B cell (primary cell): ENCODE measurements at regions of chr1 and their contacts with region 1.

Region 1: GRCh38 chr1:212455803-212456528 is 23.2 kb downstream of the NENF start:
- DNase-seq: peak; percentile 84
- ATAC-seq: peak; percentile 85
- H3K4me3 ChIP-seq: no peak overlapping the region
- H3K4me3 Mint-ChIP-seq: no peak overlapping the region
- H3K27ac ChIP-seq: no peak overlapping the region
- H3K27ac Mint-ChIP-seq: no peak overlapping the region
- H3K4me1 ChIP-seq: peaks cover 0 to 6% of the 10 kb centered on the region in 2 donors
- H3K4me1 Mint-ChIP-seq: no peaks in the 10 kb centered on the region
- H3K27me3 ChIP-seq: peaks cover 0 to 4% (median 0%) of the 10 kb centered on the region in 4 experiments
- H3K27me3 Mint-ChIP-seq: no peaks in the 10 kb centered on the region
- CTCF ChIP-seq: peak; percentile 99

Region 2: DNA sequence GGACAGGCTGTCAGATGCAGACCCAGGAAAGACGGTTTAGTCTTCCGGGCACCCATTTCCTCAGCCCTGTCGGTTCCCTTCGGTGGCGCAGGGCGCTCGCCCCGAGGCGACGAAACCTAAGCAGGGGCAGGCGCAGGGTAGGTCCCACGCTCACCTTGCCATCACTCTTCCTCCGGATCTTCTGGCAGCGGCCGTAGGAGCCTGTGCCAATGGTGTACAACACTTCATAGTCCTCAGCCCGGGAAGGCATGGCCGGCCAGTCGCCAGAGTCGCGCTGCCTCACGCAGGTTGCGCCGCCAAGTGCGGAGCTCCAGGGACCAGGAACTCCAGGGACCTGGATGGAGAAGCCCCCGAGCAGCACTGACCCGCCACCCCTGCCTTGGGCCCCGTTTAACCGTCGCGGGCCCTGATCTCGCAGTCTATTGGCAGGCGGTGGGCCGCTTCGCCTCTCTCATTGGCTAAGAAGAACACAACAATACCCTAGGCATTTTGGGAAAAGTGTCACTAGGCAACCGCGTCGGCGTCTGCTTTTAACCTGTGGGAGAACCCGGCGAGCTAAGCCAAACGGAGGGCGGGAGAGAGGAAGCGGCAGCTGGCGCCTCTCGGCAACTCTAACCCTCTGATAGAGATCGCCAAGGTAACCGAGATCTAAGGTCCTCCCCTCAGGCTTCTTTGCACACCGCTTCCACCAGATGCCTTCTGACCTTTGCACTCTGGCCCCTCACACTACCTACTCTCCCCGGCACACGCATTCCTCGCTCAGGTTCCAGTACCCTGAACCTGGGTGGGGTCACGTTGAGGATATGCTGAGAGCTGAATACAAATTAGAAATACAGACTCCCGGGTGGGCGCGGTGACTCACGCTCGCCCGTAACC is 780.5 kb before region 1 on chr1 and contains the start of gene NEK2:
- CTCF ChIA-PET with region 1: interaction called, 81 read pairs
- POLR2A ChIA-PET with region 1: no interaction called
- intact Hi-C with region 1: loop called (anchors 1 kb)
- DNase-seq: peak; percentile 82
- ATAC-seq: peak; percentile 88
- H3K4me3 ChIP-seq: peak within 1 kb of the TSS; percentile 19 to 80 (median 68)
- H3K4me3 Mint-ChIP-seq: peak within 1 kb of the TSS; percentile 93
- H3K27ac ChIP-seq: peak within 1 kb of the TSS in 1 of 2 donors; percentile 49
- H3K27ac Mint-ChIP-seq: peak within 1 kb of the TSS; percentile 66
- H3K4me1 ChIP-seq: peaks cover 21 to 30% of the 10 kb centered on the region in 2 donors
- H3K4me1 Mint-ChIP-seq: peaks cover 35% of the 10 kb centered on the region
- H3K27me3 ChIP-seq: no peaks in the 10 kb centered on the region
- H3K27me3 Mint-ChIP-seq: no peaks in the 10 kb centered on the region
- CTCF ChIP-seq: no peak
- total RNA-seq, gene NEK2: 0.32 TPM in 1 of 2 replicates, not detected in the other

Region 3: GRCh38 chr1:212035123-212035834 is 420.7 kb before region 1 on chr1 and contains the starts of genes DTL and INTS7:
- CTCF ChIA-PET with region 1: interaction called, 40 read pairs
- POLR2A ChIA-PET with region 1: interaction called, 3 read pairs
- intact Hi-C with region 1: no loop called
- DNase-seq: peak; percentile 99
- ATAC-seq: peak; percentile 86
- H3K4me3 ChIP-seq: peak within 1 kb of the TSS; percentile 58 to 95 (median 84)
- H3K4me3 Mint-ChIP-seq: peak within 1 kb of the TSS; percentile 99
- H3K27ac ChIP-seq: peak within 1 kb of the TSS; percentile 71 to 75
- H3K27ac Mint-ChIP-seq: peak within 1 kb of the TSS; percentile 95
- H3K4me1 ChIP-seq: peaks cover 16 to 19% of the 10 kb centered on the region in 2 donors
- H3K4me1 Mint-ChIP-seq: peaks cover 50% of the 10 kb centered on the region
- H3K27me3 ChIP-seq: no peaks in the 10 kb centered on the region
- H3K27me3 Mint-ChIP-seq: no peaks in the 10 kb centered on the region
- CTCF ChIP-seq: peak; percentile 95
- total RNA-seq, gene DTL: 0.10 and 0.37 TPM in 2 replicates
- total RNA-seq, gene INTS7: 15.9 and 19.2 TPM in 2 replicates

Region 4: GRCh38 chr1:212077051-212077450 is 378.9 kb before region 1 on chr1:
- CTCF ChIA-PET with region 1: interaction called, 364 read pairs
- POLR2A ChIA-PET with region 1: no interaction called
- intact Hi-C with region 1: no loop called
- DNase-seq: no peak
- ATAC-seq: no peak
- H3K4me3 ChIP-seq: no peak overlapping the region
- H3K4me3 Mint-ChIP-seq: no peak overlapping the region
- H3K27ac ChIP-seq: no peak overlapping the region
- H3K27ac Mint-ChIP-seq: no peak overlapping the region
- H3K4me1 ChIP-seq: no peaks in the 10 kb centered on the region
- H3K4me1 Mint-ChIP-seq: no peaks in the 10 kb centered on the region
- H3K27me3 ChIP-seq: no peaks in the 10 kb centered on the region
- H3K27me3 Mint-ChIP-seq: no peaks in the 10 kb centered on the region
- CTCF ChIP-seq: no peak

Region 5: GRCh38 chr1:212344905-212345304 is 111.1 kb before region 1 on chr1:
- CTCF ChIA-PET with region 1: interaction called, 17 read pairs
- POLR2A ChIA-PET with region 1: no interaction called
- intact Hi-C with region 1: no loop called
- DNase-seq: no peak
- ATAC-seq: no peak
- H3K4me3 ChIP-seq: no peak overlapping the region
- H3K4me3 Mint-ChIP-seq: no peak overlapping the region
- H3K27ac ChIP-seq: no peak overlapping the region
- H3K27ac Mint-ChIP-seq: no peak overlapping the region
- H3K4me1 ChIP-seq: no peaks in the 10 kb centered on the region
- H3K4me1 Mint-ChIP-seq: no peaks in the 10 kb centered on the region
- H3K27me3 ChIP-seq: no peaks in the 10 kb centered on the region
- H3K27me3 Mint-ChIP-seq: no peaks in the 10 kb centered on the region
- CTCF ChIP-seq: no peak

Region 6: DNA sequence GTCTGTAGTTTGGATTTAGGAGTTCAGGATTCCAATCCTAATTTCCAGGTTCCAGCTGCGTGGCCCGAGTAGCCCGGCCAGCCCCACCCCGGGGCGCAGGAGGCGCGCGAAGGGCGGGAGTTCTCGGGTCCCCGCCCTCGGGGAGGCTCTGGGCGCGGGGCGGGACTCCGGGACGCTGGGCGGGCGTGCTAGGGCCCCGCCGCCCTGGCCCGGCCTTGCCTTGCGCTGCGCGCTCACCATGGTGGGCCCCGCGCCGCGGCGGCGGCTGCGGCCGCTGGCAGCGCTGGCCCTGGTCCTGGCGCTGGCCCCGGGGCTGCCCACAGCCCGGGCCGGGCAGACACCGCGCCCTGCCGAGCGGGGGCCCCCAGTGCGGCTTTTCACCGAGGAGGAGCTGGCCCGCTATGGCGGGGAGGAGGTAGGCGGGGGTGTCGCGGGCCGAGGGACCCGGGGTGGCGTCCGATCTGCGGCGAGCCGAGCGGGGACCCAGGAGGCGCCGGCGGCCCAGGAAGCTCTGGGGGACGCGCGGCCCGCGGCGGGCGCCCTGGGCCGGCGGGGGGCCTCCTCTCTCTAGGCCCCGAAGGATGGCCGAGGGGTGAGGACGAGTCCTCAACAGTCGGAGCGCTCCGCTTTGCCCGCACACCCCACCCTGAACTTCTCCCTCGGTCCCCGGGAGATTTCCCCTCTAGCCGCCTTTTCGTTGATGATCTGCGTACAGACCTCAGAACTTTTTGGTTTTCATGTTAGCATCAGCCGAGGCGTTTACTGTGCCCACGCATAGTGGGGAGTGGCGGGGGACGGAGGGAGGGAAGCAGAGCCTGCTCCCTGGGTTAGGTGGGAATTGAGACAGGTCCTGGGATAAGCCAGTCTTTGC is 23.0 kb before region 1 on chr1 and contains the start of gene NENF:
- CTCF ChIA-PET with region 1: interaction called, 26 read pairs
- POLR2A ChIA-PET with region 1: no interaction called
- intact Hi-C with region 1: no loop called
- DNase-seq: peak; percentile 81
- ATAC-seq: peak; percentile 99
- H3K4me3 ChIP-seq: peak within 1 kb of the TSS; percentile 26 to 82 (median 58)
- H3K4me3 Mint-ChIP-seq: peak within 1 kb of the TSS; percentile 82
- H3K27ac ChIP-seq: peak within 1 kb of the TSS in 1 of 2 donors; percentile 65
- H3K27ac Mint-ChIP-seq: peak within 1 kb of the TSS; percentile 33
- H3K4me1 ChIP-seq: peaks cover 12 to 15% of the 10 kb centered on the region in 2 donors
- H3K4me1 Mint-ChIP-seq: peaks cover 25% of the 10 kb centered on the region
- H3K27me3 ChIP-seq: no peaks in the 10 kb centered on the region
- H3K27me3 Mint-ChIP-seq: no peaks in the 10 kb centered on the region
- CTCF ChIP-seq: no peak
- total RNA-seq, gene NENF: 20.3 and 22.7 TPM in 2 replicates

Region 7: DNA sequence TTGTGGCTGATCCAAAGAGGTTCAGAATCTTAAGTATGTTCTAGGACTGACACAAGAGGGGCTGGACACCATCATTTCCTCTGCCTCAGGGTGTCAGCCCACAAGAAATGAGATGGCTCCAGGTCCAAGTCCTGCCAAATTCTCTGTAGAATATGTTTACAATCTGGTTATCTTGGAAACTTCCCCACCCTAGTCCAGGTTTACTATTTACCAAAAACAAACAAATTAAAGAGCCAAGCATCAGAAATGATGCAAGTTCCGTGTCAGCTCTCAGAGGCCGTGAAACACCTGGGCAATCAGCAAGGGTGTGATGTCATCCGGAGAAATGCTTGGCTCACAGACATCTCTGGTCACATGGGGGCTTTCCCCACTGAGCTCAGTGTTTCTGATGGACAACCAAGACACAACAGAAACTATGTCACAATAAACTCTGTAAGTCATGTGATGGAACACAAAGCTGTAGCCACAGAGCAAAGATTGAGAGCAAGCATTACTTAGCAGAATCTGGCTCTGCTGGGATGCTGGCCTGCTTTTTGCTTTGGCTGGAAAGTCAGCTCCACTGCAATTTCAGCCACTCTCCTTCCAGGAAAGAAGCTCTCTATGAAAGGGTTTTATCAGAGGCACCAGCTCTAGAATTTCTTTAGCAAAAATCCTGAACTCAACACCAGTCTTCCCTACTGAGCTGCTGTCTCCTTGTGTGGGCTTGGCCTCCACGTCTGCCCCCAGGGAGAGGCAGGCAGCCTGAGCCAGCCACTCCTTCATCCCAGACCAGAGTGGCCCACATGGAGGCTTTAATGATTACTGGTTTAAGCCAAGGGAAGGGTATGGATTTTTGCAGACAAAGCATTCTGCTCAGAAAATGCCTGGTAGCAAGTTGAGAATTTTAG is 32.7 kb after region 1 on chr1:
- CTCF ChIA-PET with region 1: no interaction called
- POLR2A ChIA-PET with region 1: no interaction called
- intact Hi-C with region 1: no loop called
- DNase-seq: no peak
- ATAC-seq: peak; percentile 31
- H3K4me3 ChIP-seq: no peak overlapping the region
- H3K4me3 Mint-ChIP-seq: no peak overlapping the region
- H3K27ac ChIP-seq: no peak overlapping the region
- H3K27ac Mint-ChIP-seq: no peak overlapping the region
- H3K4me1 ChIP-seq: no peaks in the 10 kb centered on the region
- H3K4me1 Mint-ChIP-seq: no peaks in the 10 kb centered on the region
- H3K27me3 ChIP-seq: peaks cover 0 to 4% (median 0%) of the 10 kb centered on the region in 4 experiments
- H3K27me3 Mint-ChIP-seq: peaks cover 13% of the 10 kb centered on the region
- CTCF ChIP-seq: no peak

Region 8: GRCh38 chr1:212710566-212710965 is 254.6 kb after region 1 on chr1:
- CTCF ChIA-PET with region 1: no interaction called
- POLR2A ChIA-PET with region 1: no interaction called
- intact Hi-C with region 1: no loop called
- DNase-seq: no peak
- ATAC-seq: no peak
- H3K4me3 ChIP-seq: no peak overlapping the region
- H3K4me3 Mint-ChIP-seq: no peak overlapping the region
- H3K27ac ChIP-seq: no peak overlapping the region
- H3K27ac Mint-ChIP-seq: no peak overlapping the region
- H3K4me1 ChIP-seq: no peaks in the 10 kb centered on the region
- H3K4me1 Mint-ChIP-seq: no peaks in the 10 kb centered on the region
- H3K27me3 ChIP-seq: no peaks in the 10 kb centered on the region
- H3K27me3 Mint-ChIP-seq: no peaks in the 10 kb centered on the region
- CTCF ChIP-seq: no peak

Region 9: DNA sequence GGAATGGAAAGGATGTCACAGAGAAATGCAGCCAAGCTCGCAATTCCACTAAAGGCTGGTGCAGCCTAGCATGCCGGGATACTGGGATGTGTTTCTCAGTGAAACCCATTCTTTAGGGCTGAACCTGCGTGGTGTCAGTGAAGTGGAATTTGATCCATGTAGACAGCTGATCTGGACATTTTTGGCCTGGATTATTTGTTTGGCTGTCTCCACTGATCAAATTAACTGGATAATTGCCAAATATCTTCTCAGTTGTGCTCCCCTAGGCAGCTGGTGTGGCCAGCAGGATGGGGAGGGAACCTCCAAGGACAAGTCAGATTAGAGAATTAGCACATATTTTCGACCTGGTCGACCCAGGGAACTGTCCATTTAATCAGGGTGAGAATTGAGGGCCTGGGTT is 913.5 kb after region 1 on chr1:
- CTCF ChIA-PET with region 1: no interaction called
- POLR2A ChIA-PET with region 1: no interaction called
- intact Hi-C with region 1: no loop called
- DNase-seq: no peak
- ATAC-seq: no peak
- H3K4me3 ChIP-seq: no peak overlapping the region
- H3K4me3 Mint-ChIP-seq: no peak overlapping the region
- H3K27ac ChIP-seq: no peak overlapping the region
- H3K27ac Mint-ChIP-seq: no peak overlapping the region
- H3K4me1 ChIP-seq: no peaks in the 10 kb centered on the region
- H3K4me1 Mint-ChIP-seq: no peaks in the 10 kb centered on the region
- H3K27me3 ChIP-seq: peaks cover 0 to 3% (median 0%) of the 10 kb centered on the region in 4 experiments
- H3K27me3 Mint-ChIP-seq: peaks cover 6% of the 10 kb centered on the region
- CTCF ChIP-seq: no peak